Body of pancreas (tissue), 4 donors: ENCODE measurements at regions of chr20 and their contacts with region 1.

Region 1: GRCh38 chr20:49132995-49133478 is 55.1 kb downstream of the STAU1 start:
- DNase-seq: peak; percentile 32 to 70 (median 38)
- ATAC-seq: peak; percentile 92
- H3K4me3 ChIP-seq: no peak overlapping the region
- H3K27ac ChIP-seq: peak overlapping the region; percentile 40 to 51 (median 44)
- H3K4me1 ChIP-seq: peaks cover 16% of the 10 kb centered on the region
- H3K27me3 ChIP-seq: no peaks in the 10 kb centered on the region
- CTCF ChIP-seq: peak; percentile 41 to 81 (median 73)
- POLR2A ChIP-seq: no peak

Region 2: DNA sequence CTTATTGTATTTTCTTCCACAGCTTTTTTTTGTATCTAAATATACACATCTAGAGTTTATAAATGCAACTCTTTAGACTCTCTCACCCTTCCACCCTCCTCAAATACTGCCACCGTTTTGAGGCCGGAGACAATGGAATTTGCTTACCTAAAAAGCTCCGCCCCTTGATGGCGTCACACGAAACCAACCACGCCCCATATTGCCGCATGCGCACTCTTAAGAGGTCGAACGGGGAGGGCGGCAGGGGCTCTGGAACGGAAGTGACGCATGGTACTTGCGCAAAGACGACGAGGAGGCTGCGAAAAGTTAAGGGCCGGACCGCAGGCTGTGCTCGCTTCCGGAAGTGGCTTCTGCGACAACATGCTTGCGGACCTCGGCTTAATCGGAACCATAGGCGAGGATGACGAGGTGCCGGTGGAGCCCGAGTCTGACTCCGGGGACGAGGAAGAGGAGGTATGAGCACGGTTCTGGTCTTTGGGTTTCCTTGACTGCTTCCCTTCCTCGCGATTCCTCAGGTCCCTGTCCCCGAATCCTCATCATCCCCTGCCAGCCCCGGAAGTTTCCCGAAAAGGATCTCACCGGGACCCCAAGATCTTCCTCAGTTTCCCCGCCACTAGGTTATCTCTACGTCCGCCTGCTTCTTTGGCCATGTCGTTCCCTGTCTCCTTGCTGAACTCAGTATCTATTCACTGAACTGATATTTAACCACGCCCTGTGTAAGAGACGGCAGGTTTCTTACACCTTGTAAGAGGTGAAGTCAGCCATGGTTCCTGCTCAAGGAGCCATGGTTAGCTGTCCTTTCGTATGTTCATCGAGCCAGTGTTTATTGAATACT is 86.3 kb after region 1 on chr20 and contains the start of gene DDX27:
- intact Hi-C with region 1: loop called (anchors 5 kb)
- DNase-seq: peak; percentile 97 to 99 (median 98)
- ATAC-seq: peak; percentile 97
- H3K4me3 ChIP-seq: peak within 1 kb of the TSS; percentile 73 to 82
- H3K27ac ChIP-seq: peak within 1 kb of the TSS; percentile 61 to 87 (median 72)
- H3K4me1 ChIP-seq: peaks cover 24% of the 10 kb centered on the region
- H3K27me3 ChIP-seq: no peaks in the 10 kb centered on the region
- CTCF ChIP-seq: peak in 1 of 7 experiments; percentile 12
- POLR2A ChIP-seq: peak; percentile 47 to 86 (median 85)
- total RNA-seq, gene DDX27: 18.2 to 42.8 TPM

Region 3: GRCh38 chr20:49446808-49447207 is 313.8 kb after region 1 on chr20:
- intact Hi-C with region 1: no loop called
- DNase-seq: peak; percentile 35 to 46 (median 40)
- ATAC-seq: peak; percentile 30
- H3K4me3 ChIP-seq: no peak overlapping the region
- H3K27ac ChIP-seq: no peak overlapping the region
- H3K4me1 ChIP-seq: no peaks in the 10 kb centered on the region
- H3K27me3 ChIP-seq: peaks cover 0 to 3% of the 10 kb centered on the region in 2 donors
- CTCF ChIP-seq: no peak
- POLR2A ChIP-seq: no peak